ENCODE measurements at regions of chr10 and their contacts with region 1.

Region 1: GRCh38 chr10:57716886-57717285 is 550.8 kb downstream of the IPMK start:
- DNase-seq: no peak
- H3K4me3 ChIP-seq: no peak overlapping the region
- H3K27ac ChIP-seq: no peak overlapping the region
- H3K4me1 ChIP-seq: no peaks in the 10 kb centered on the region
- H3K27me3 ChIP-seq: no peaks in the 10 kb centered on the region
- CTCF ChIP-seq: peak in 2 of 3 experiments; percentile 16 to 54

Region 2: GRCh38 chr10:57822965-57823364 is 106.1 kb after region 1 on chr10:
- dilution Hi-C with region 1: loop called (anchors 5 kb)
- DNase-seq: no peak
- H3K4me3 ChIP-seq: no peak overlapping the region
- H3K27ac ChIP-seq: no peak overlapping the region
- H3K4me1 ChIP-seq: no peaks in the 10 kb centered on the region
- H3K27me3 ChIP-seq: no peaks in the 10 kb centered on the region
- CTCF ChIP-seq: no peak